ENCODE measurements at regions of chr2 and their contacts with region 1.

Region 1: GRCh38 chr2:3179208-3179607 is 198.4 kb downstream of the EIPR1 start:
- DNase-seq: peak; percentile 32
- H3K4me3 ChIP-seq: no peak overlapping the region
- H3K27ac ChIP-seq: no peak overlapping the region
- H3K4me1 ChIP-seq: no peaks in the 10 kb centered on the region
- CTCF ChIP-seq: peak; percentile 73

Region 2: DNA sequence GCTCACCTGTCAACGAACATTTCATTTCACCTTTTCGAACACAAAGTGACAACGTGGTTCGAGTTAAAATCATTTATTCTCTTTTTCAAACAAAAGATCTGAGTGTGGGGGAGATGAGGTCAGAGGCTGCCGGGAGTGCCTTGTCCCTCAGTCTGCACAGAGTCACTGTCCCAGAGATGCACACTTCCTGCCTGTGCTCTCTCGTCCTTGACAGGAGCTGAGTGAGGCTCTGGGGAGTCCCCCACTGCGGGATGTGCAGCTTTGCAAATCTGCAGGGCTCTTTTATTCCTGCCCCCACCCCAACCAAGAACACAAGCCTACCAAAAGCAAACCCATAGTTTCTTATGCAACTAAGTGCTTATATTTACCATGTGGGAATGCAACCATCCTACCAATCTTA is 299.4 kb before region 1 on chr2:
- CTCF ChIA-PET with region 1: interaction called, 10 read pairs
- POLR2A ChIA-PET with region 1: no interaction called
- intact Hi-C with region 1: no loop called
- DNase-seq: peak; percentile 69
- H3K4me3 ChIP-seq: no peak overlapping the region
- H3K27ac ChIP-seq: no peak overlapping the region
- H3K4me1 ChIP-seq: peaks cover 15% of the 10 kb centered on the region
- CTCF ChIP-seq: no peak

Region 3: GRCh38 chr2:3168230-3168891 is 10.8 kb before region 1 on chr2:
- CTCF ChIA-PET with region 1: no interaction called
- POLR2A ChIA-PET with region 1: no interaction called
- intact Hi-C with region 1: no loop called
- DNase-seq: no peak
- H3K4me3 ChIP-seq: no peak overlapping the region
- H3K27ac ChIP-seq: no peak overlapping the region
- H3K4me1 ChIP-seq: peaks cover 14% of the 10 kb centered on the region
- CTCF ChIP-seq: no peak

Region 4: DNA sequence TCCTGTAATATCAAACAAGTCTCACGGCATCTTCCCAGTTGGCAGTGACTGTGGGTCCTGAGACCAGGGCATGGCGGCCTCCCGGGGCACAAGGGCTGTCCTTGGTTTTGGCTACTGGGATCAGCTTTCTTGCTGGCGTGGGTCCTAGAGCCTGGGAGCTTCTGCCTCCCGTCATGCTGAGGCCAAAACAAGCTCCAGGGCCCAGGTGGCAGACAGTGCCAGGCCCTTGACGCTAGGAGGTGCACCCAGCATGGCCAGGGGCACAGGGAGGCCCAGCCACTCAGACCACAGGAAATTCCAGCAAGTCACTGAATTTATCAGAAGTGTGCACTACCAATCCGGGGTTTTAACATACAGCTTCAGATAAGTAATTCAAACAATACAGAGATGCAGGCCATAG is 13.7 kb after region 1 on chr2:
- CTCF ChIA-PET with region 1: no interaction called
- POLR2A ChIA-PET with region 1: no interaction called
- intact Hi-C with region 1: no loop called
- DNase-seq: no peak
- H3K4me3 ChIP-seq: no peak overlapping the region
- H3K27ac ChIP-seq: no peak overlapping the region
- H3K4me1 ChIP-seq: peaks cover 12% of the 10 kb centered on the region
- CTCF ChIP-seq: no peak

Region 5: GRCh38 chr2:3293221-3293620 is 114.0 kb after region 1 on chr2:
- CTCF ChIA-PET with region 1: no interaction called
- POLR2A ChIA-PET with region 1: no interaction called
- intact Hi-C with region 1: no loop called
- DNase-seq: no peak
- H3K4me3 ChIP-seq: no peak overlapping the region
- H3K27ac ChIP-seq: no peak overlapping the region
- H3K4me1 ChIP-seq: peaks cover 7% of the 10 kb centered on the region
- CTCF ChIP-seq: no peak

Measured in OCI-LY7 (cell line).